CD8-positive, alpha-beta memory T cell (primary cell): ENCODE measurements at regions of chr4 and their contacts with region 1.

Region 1: DNA sequence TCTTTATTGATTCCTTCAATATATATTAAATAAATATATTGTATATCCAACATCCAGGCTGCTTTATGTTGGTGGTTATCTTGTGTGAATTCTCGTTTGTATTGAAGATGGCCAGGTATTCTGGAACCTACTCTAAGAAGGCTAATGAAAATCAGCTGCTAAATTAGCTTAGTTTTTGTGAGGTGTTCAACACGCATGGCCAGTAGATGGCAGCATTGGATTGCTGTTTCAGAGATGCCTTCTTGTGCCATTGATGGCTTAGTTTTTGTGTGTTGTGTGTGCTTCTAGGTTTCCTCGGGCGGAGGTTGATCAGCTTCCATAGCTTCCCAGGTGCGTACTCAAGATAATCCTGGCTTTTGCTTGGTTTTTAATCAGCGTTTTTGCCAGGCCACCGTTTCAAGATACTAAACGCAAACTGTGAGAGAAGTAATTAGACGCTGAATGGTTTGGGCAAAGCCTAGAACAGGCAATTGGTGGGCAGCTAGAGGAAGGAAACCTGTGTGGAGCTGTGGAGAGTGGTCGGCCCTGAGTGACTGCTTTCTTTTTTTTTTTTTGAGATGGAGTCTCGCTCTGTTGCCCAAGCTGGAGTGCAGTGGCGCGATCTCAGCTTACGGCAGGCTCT is 15.1 kb downstream of the NOCT start:
- DNase-seq: peak; percentile 63 to 81 (median 68)
- H3K4me3 ChIP-seq: no peak overlapping the region
- H3K4me3 Mint-ChIP-seq: no peak overlapping the region
- H3K27ac ChIP-seq: no peak overlapping the region
- H3K27ac Mint-ChIP-seq: peak overlapping the region in 6 of 8 donors; percentile 3 to 28 (median 10)
- H3K4me1 ChIP-seq: no peaks in the 10 kb centered on the region
- H3K4me1 Mint-ChIP-seq: peaks cover 7 to 18% (median 7%) of the 10 kb centered on the region in 3 donors
- H3K27me3 ChIP-seq: no peaks in the 10 kb centered on the region
- H3K27me3 Mint-ChIP-seq: no peaks in the 10 kb centered on the region

Region 2: DNA sequence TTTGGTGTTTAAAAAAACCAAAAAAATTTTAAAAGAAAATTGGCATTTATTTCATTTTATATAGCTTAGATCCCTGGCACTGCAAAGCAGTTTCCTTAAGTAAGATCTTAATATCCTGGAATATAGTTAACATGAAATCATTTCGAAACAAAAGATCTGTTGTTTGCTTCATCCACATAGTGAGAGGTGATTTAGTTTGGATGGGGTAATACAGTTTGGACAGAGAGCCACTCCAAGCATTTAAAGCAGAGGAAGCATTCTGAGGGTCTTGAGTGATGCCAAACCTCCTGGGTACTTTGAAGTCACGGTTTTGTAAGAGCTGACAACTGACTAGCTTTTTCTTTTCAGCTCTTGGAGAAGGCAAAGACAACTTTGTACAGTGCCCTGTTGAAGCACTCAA is 13.6 kb after region 1 on chr4:
- CTCF ChIA-PET with region 1: interaction called, 13 read pairs
- POLR2A ChIA-PET with region 1: no interaction called
- DNase-seq: no peak
- H3K4me3 ChIP-seq: no peak overlapping the region
- H3K4me3 Mint-ChIP-seq: no peak overlapping the region
- H3K27ac ChIP-seq: no peak overlapping the region
- H3K27ac Mint-ChIP-seq: peak overlapping the region in 2 of 8 donors; percentile 19 to 23
- H3K4me1 ChIP-seq: no peaks in the 10 kb centered on the region
- H3K4me1 Mint-ChIP-seq: peaks cover 6 to 21% (median 18%) of the 10 kb centered on the region in 3 donors
- H3K27me3 ChIP-seq: no peaks in the 10 kb centered on the region
- H3K27me3 Mint-ChIP-seq: no peaks in the 10 kb centered on the region

Region 3: GRCh38 chr4:139083956-139084803 is 53.5 kb after region 1 on chr4:
- CTCF ChIA-PET with region 1: interaction called, 14 read pairs
- POLR2A ChIA-PET with region 1: interaction called, 7 read pairs
- DNase-seq: peak; percentile 70 to 90 (median 83)
- H3K4me3 ChIP-seq: peak overlapping the region; percentile 98
- H3K4me3 Mint-ChIP-seq: peak overlapping the region; percentile 87 to 100 (median 92)
- H3K27ac ChIP-seq: peak overlapping the region; percentile 94
- H3K27ac Mint-ChIP-seq: peak overlapping the region; percentile 88 to 100 (median 98)
- H3K4me1 ChIP-seq: peaks cover 31% of the 10 kb centered on the region
- H3K4me1 Mint-ChIP-seq: peaks cover 38 to 52% (median 46%) of the 10 kb centered on the region in 3 donors
- H3K27me3 ChIP-seq: no peaks in the 10 kb centered on the region
- H3K27me3 Mint-ChIP-seq: peaks cover 0 to 4% of the 10 kb centered on the region in 2 donors

Region 4: GRCh38 chr4:139229534-139230039 is 198.9 kb after region 1 on chr4:
- CTCF ChIA-PET with region 1: interaction called, 24 read pairs
- POLR2A ChIA-PET with region 1: no interaction called
- DNase-seq: peak in 2 of 5 donors; percentile 34 to 45
- H3K4me3 ChIP-seq: no peak overlapping the region
- H3K4me3 Mint-ChIP-seq: no peak overlapping the region
- H3K27ac ChIP-seq: no peak overlapping the region
- H3K27ac Mint-ChIP-seq: no peak overlapping the region
- H3K4me1 ChIP-seq: no peaks in the 10 kb centered on the region
- H3K4me1 Mint-ChIP-seq: peaks cover 2 to 5% (median 5%) of the 10 kb centered on the region in 3 donors
- H3K27me3 ChIP-seq: no peaks in the 10 kb centered on the region
- H3K27me3 Mint-ChIP-seq: no peaks in the 10 kb centered on the region

Region 5: GRCh38 chr4:139530833-139531427 is 500.2 kb after region 1 on chr4:
- CTCF ChIA-PET with region 1: interaction called, 12 read pairs
- POLR2A ChIA-PET with region 1: no interaction called
- DNase-seq: peak; percentile 46 to 69 (median 52)
- H3K4me3 ChIP-seq: no peak overlapping the region
- H3K4me3 Mint-ChIP-seq: peak overlapping the region in 1 of 7 donors; percentile 52
- H3K27ac ChIP-seq: no peak overlapping the region
- H3K27ac Mint-ChIP-seq: peak overlapping the region in 5 of 8 donors; percentile 25 to 82 (median 51)
- H3K4me1 ChIP-seq: peaks cover 11% of the 10 kb centered on the region
- H3K4me1 Mint-ChIP-seq: peaks cover 26 to 35% (median 30%) of the 10 kb centered on the region in 3 donors
- H3K27me3 ChIP-seq: no peaks in the 10 kb centered on the region
- H3K27me3 Mint-ChIP-seq: no peaks in the 10 kb centered on the region